ENCODE measurements at regions of chr14 and their contacts with region 1.

Region 1: DNA sequence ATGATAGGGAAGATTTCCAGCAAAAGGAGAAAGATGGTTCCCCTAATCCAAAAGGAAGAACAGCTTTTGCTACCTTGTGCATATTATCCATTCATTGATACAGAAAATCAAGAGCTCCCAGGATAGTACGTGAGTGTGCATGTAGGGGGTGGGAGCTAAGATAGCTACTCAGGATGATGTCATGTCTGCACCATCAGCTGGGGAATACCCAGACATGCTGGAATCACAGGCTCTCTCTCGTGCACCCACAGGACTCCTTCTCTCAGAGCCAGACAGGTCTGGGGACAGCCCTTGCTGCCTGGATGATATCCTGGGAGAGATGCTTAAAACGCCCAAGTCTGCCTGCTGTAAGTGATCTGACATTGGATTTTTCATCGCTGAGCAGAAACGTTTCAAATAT is 38.9 kb downstream of the FOXN3 start:
- DNase-seq: peak; percentile 53
- H3K4me3 ChIP-seq: no peak overlapping the region
- H3K27ac ChIP-seq: no peak overlapping the region
- H3K4me1 ChIP-seq: no peaks in the 10 kb centered on the region
- H3K27me3 ChIP-seq: no peaks in the 10 kb centered on the region
- CTCF ChIP-seq: no peak

Region 2: DNA sequence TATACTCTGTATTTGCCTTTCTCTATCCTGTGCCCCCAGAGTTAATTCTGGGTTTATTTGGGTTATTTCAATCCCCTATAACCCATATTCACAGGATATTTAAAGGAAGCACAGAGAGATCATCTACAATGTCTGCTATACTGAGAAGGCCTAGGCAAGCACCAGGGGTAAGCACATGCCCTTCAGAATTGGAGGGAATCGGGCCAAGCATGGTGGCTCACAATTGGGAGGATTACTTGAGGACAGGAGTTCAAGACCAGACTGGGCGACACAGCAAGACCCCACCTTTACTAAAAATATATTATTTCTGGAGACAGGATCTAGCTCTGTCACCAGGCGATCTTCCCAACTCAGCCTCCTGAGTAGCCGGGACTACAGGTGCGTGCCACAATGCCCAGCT is 27.6 kb after region 1 on chr14:
- CTCF ChIA-PET with region 1: interaction called, 12 read pairs
- dilution Hi-C with region 1: no loop called
- in situ Hi-C with region 1: no loop called
- intact Hi-C with region 1: no loop called
- DNase-seq: no peak
- H3K4me3 ChIP-seq: no peak overlapping the region
- H3K27ac ChIP-seq: no peak overlapping the region
- H3K4me1 ChIP-seq: peaks cover 28% of the 10 kb centered on the region
- H3K27me3 ChIP-seq: no peaks in the 10 kb centered on the region
- CTCF ChIP-seq: no peak

Measured in mammary epithelial cell (primary cell).